ENCODE measurements at regions of chr19 and their contacts with region 1.

Region 1: GRCh38 chr19:13022859-13023636 is 27.8 kb downstream of the NFIX start:
- DNase-seq: peak; percentile 73 to 84 (median 73)
- H3K4me3 ChIP-seq: peak overlapping the region in 5 of 7 experiments; percentile 63 to 83 (median 72)
- H3K27ac ChIP-seq: peak overlapping the region; percentile 46 to 83
- H3K4me1 ChIP-seq: peaks cover 0 to 40% (median 18%) of the 10 kb centered on the region in 4 experiments
- H3K27me3 ChIP-seq: peaks cover 2 to 54% (median 7%) of the 10 kb centered on the region in 5 experiments

Region 2: GRCh38 chr19:12956446-12957388 is 66.3 kb before region 1 on chr19 and contains the start of gene GADD45GIP1:
- CTCF ChIA-PET with region 1: no interaction called
- POLR2A ChIA-PET with region 1: no interaction called
- DNase-seq: peak; percentile 78 to 88 (median 84)
- H3K4me3 ChIP-seq: peak within 1 kb of the TSS; percentile 71 to 96 (median 89)
- H3K27ac ChIP-seq: peak within 1 kb of the TSS; percentile 61 to 87
- H3K4me1 ChIP-seq: peaks cover 0 to 53% (median 48%) of the 10 kb centered on the region in 4 experiments
- H3K27me3 ChIP-seq: no peaks in the 10 kb centered on the region

Region 3: GRCh38 chr19:13007292-13008045 is 15.6 kb before region 1 on chr19:
- CTCF ChIA-PET with region 1: interaction called, 66 read pairs
- POLR2A ChIA-PET with region 1: interaction called, 4 read pairs
- DNase-seq: peak in 1 of 3 donors; percentile 28
- H3K4me3 ChIP-seq: no peak overlapping the region
- H3K27ac ChIP-seq: no peak overlapping the region
- H3K4me1 ChIP-seq: peaks cover 0 to 29% (median 15%) of the 10 kb centered on the region in 4 experiments
- H3K27me3 ChIP-seq: peaks cover 0 to 48% (median 25%) of the 10 kb centered on the region in 5 experiments